ENCODE measurements at regions of chr4 and their contacts with region 1.

Region 1: DNA sequence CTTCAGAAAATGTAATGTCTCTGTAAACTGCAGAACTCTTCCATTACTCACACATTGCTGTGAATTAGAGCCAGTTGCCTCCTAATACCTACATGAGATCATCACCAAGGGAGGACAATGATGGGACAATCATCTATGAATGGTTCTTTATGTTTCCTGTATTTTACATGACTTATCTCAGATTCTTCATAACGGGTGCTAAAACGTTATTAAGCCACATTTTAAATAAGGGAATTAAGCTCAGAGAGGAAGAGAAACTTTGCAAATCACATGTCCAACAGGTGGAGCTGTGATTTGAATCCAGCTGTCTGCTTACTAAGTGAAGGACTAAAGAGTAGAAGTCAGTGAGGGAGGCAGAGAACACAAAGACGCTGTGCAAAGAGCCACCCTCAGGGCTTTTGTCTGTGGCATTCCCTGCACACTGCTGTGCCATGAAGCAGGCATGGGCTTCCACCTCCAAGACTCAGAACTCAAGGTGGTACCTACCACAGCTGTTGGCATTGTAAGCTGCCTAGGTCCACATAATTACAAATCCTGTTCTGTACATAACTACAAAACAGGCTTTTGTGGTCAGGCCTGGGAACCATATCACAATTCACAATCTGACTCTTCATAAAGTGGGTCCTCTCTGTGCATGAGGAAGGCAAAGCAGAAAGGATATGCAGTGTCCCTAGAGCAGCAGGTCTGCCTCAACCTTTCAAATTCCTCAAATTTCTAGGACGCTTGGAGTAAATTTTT is 12.8 kb downstream of the TBC1D9 start:
- DNase-seq: peak; percentile 89
- H3K4me3 ChIP-seq: peak overlapping the region; percentile 44
- H3K27ac ChIP-seq: peak overlapping the region; percentile 86
- H3K4me1 ChIP-seq: peaks cover 56% of the 10 kb centered on the region
- CTCF ChIP-seq: peak; percentile 79

Region 2: DNA sequence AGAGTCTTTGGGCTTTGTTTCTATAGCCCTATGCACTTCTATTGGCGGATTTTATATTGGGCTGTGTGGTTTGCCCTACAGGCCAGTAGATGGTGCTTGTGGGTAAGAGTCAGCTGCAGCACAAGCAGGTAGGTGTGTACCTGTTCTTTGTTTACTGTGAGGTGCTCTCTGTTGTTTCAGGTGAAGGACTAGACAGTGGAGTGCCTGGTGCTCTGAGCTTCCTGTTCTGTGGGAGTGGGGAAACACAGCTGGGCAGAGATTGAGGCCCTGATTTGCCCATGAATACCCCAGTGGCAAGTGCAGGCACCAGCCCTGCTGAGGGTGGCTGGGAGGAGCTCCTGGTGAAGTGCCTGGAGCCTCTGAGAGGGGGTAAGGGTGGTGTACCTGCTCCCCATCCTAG is 148.3 kb before region 1 on chr4:
- CTCF ChIA-PET with region 1: interaction called, 4 read pairs
- POLR2A ChIA-PET with region 1: interaction called, 4 read pairs
- intact Hi-C with region 1: loop called (anchors 1 kb)
- DNase-seq: peak; percentile 73
- H3K4me3 ChIP-seq: no peak overlapping the region
- H3K27ac ChIP-seq: no peak overlapping the region
- H3K4me1 ChIP-seq: peaks cover 2% of the 10 kb centered on the region
- CTCF ChIP-seq: peak; percentile 87

Region 3: DNA sequence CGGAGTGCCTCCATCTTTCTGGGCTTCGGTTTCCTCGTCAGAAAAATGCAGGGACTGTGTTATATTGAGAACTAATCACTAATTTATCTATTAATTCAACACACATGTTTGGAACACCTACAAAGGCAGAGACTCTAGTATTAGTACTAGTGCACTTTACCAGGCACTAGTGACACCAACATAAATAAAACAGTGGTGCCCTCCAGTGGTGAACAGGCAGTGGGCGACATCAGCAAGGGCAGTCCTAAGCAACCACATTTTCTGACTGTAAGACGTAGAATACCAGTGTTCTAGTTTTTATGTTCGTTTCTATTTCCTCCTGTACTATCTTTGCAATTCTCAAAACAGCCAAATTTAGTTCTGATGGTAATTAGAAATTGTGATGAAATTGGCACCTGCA is 105.5 kb before region 1 on chr4:
- CTCF ChIA-PET with region 1: no interaction called
- POLR2A ChIA-PET with region 1: interaction called, 3 read pairs
- intact Hi-C with region 1: loop called (anchors 5 kb)
- DNase-seq: peak; percentile 85
- H3K4me3 ChIP-seq: no peak overlapping the region
- H3K27ac ChIP-seq: no peak overlapping the region
- H3K4me1 ChIP-seq: peaks cover 20% of the 10 kb centered on the region
- CTCF ChIP-seq: peak; percentile 99

Region 4: GRCh38 chr4:140756319-140757231 is 13.2 kb after region 1 on chr4 and contains the start of gene TBC1D9:
- CTCF ChIA-PET with region 1: interaction called, 15 read pairs
- POLR2A ChIA-PET with region 1: interaction called, 12 read pairs
- intact Hi-C with region 1: loop called (anchors 1 kb)
- DNase-seq: peak; percentile 75
- H3K4me3 ChIP-seq: peak within 1 kb of the TSS; percentile 73
- H3K27ac ChIP-seq: no peak within 1 kb of the TSS
- H3K4me1 ChIP-seq: peaks cover 30% of the 10 kb centered on the region
- CTCF ChIP-seq: peak; percentile 33
- total RNA-seq, gene TBC1D9: 1.0 and 1.6 TPM in 2 replicates

Region 5: GRCh38 chr4:140800666-140801065 is 57.3 kb after region 1 on chr4:
- CTCF ChIA-PET with region 1: interaction called, 3 read pairs
- POLR2A ChIA-PET with region 1: interaction called, 5 read pairs
- intact Hi-C with region 1: loop called (anchors 2 kb)
- DNase-seq: peak; percentile 62
- H3K4me3 ChIP-seq: no peak overlapping the region
- H3K27ac ChIP-seq: no peak overlapping the region
- H3K4me1 ChIP-seq: peaks cover 64% of the 10 kb centered on the region
- CTCF ChIP-seq: no peak

Region 6: GRCh38 chr4:140851032-140851636 is 107.8 kb after region 1 on chr4:
- CTCF ChIA-PET with region 1: no interaction called
- POLR2A ChIA-PET with region 1: interaction called, 3 read pairs
- intact Hi-C with region 1: loop called (anchors 1 kb)
- DNase-seq: peak; percentile 86
- H3K4me3 ChIP-seq: no peak overlapping the region
- H3K27ac ChIP-seq: no peak overlapping the region
- H3K4me1 ChIP-seq: peaks cover 27% of the 10 kb centered on the region
- CTCF ChIP-seq: peak; percentile 100